ENCODE measurements at regions of chr12 and their contacts with region 1.

Region 1: GRCh38 chr12:27424631-27425230 is 21.8 kb upstream of the SMCO2 start:
- DNase-seq: peak; percentile 30
- ATAC-seq: peak; percentile 85
- H3K4me3 ChIP-seq: no peak overlapping the region
- H3K27ac ChIP-seq: no peak overlapping the region
- H3K4me1 ChIP-seq: no peaks in the 10 kb centered on the region
- H3K27me3 ChIP-seq: no peaks in the 10 kb centered on the region
- CTCF ChIP-seq: peak; percentile 80

Region 2: DNA sequence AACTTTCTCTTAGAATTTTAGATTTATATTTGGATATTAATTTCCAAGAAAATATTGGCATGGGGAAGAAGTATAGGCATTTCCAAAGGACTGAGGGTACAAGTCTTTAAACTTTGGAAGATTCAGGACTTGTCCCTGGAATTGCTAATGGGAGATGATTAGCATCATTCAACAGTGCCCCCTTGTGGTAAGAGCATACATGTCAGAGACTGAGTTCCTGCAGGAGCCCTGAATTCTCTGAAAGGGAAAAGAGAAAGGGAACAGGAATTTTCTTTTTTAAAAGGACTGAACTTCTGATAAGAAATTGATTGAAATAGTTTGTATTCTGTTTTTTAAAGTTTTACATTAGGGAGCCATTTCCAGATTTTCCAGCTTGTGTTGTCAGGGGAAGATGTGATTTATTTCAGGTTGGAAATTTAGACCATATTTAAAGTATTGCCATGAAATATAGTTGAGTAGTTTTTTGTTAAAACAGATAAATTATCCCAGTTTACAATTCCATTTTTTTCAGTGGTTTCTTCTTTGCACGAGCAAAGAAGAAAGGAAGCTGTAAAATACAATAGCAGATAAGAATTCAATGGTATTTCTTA is 227.5 kb after region 1 on chr12:
- CTCF ChIA-PET with region 1: no interaction called
- POLR2A ChIA-PET with region 1: no interaction called
- in situ Hi-C with region 1: no loop called
- intact Hi-C with region 1: loop called (anchors 1 kb)
- DNase-seq: peak; percentile 69
- ATAC-seq: peak; percentile 95
- H3K4me3 ChIP-seq: no peak overlapping the region
- H3K27ac ChIP-seq: no peak overlapping the region
- H3K4me1 ChIP-seq: no peaks in the 10 kb centered on the region
- H3K27me3 ChIP-seq: no peaks in the 10 kb centered on the region
- CTCF ChIP-seq: peak; percentile 87; the same call in 1 of the 2 replicates

Region 3: GRCh38 chr12:27703710-27704452 is 279.1 kb after region 1 on chr12:
- CTCF ChIA-PET with region 1: no interaction called
- POLR2A ChIA-PET with region 1: no interaction called
- in situ Hi-C with region 1: no loop called
- intact Hi-C with region 1: loop called (anchors 5 kb)
- DNase-seq: peak; percentile 96
- ATAC-seq: peak; percentile 99
- H3K4me3 ChIP-seq: no peak overlapping the region
- H3K27ac ChIP-seq: peak overlapping the region; percentile 74; the same call in 1 of the 2 replicates
- H3K4me1 ChIP-seq: peaks cover 2% of the 10 kb centered on the region; the same call in 1 of the 2 replicates
- H3K27me3 ChIP-seq: no peaks in the 10 kb centered on the region
- CTCF ChIP-seq: peak; percentile 92